Activated B cell treated with CpG ODN at 0.5 μM for 24 hours (primary cell): ENCODE measurements at regions of chr12 and their contacts with region 1.

Region 1: DNA sequence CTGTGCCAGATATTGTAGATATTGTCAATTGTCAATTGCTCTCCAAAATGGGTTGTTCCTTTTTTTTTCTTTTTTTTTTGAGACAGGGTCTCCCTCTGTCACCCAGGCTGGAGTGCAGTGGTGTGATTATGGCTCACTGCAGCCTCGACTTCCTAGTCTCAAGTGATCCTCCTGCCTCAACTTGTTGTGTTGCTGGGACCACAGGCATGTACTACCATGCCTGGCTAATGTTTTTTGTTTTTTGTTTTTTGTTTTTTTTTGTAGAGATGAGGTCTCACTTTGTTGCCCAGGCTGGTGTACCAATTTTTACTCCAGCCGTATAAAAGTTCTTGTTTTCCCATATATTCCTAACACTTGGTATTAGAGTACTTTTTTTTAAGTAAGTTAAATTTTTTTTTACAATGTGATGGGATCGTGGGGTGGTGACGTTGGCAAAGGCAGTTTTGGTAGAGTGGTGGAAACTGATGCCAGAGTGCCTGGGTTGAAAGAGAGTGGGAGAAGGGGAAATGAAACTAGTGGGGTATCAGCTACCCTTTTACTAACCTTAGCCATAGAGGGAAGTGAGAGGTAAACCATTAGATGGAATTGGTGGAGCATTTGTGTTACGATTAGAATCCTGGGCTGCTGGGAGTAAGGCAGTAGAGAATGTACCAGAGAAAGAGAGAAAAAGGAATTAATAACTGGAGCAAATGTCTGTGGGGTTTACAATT is 33.0 kb upstream of the CFAP54 start:
- DNase-seq: no peak
- ATAC-seq: peak; percentile 94
- H3K4me3 Mint-ChIP-seq: peak overlapping the region; percentile 55
- H3K27ac Mint-ChIP-seq: peak overlapping the region; percentile 62
- H3K4me1 Mint-ChIP-seq: peaks cover 28% of the 10 kb centered on the region
- H3K27me3 Mint-ChIP-seq: no peaks in the 10 kb centered on the region
- CTCF ChIP-seq: no peak

Region 2: GRCh38 chr12:96359328-96359727 is 97.1 kb before region 1 on chr12:
- CTCF ChIA-PET with region 1: no interaction called
- POLR2A ChIA-PET with region 1: interaction called, 14 read pairs
- intact Hi-C with region 1: no loop called
- DNase-seq: no peak
- ATAC-seq: no peak
- H3K4me3 Mint-ChIP-seq: no peak overlapping the region
- H3K27ac Mint-ChIP-seq: no peak overlapping the region
- H3K4me1 Mint-ChIP-seq: peaks cover 60% of the 10 kb centered on the region
- H3K27me3 Mint-ChIP-seq: no peaks in the 10 kb centered on the region
- CTCF ChIP-seq: no peak

Region 3: GRCh38 chr12:96445691-96446583 is 10.5 kb before region 1 on chr12:
- CTCF ChIA-PET with region 1: no interaction called
- POLR2A ChIA-PET with region 1: interaction called, 10 read pairs
- intact Hi-C with region 1: loop called (anchors 1 kb)
- DNase-seq: no peak
- ATAC-seq: peak; percentile 98
- H3K4me3 Mint-ChIP-seq: peak overlapping the region; percentile 5
- H3K27ac Mint-ChIP-seq: peak overlapping the region; percentile 79
- H3K4me1 Mint-ChIP-seq: peaks cover 16% of the 10 kb centered on the region
- H3K27me3 Mint-ChIP-seq: no peaks in the 10 kb centered on the region
- CTCF ChIP-seq: no peak